H1 (cell line): ENCODE measurements at regions of chr11 and their contacts with region 1.

Region 1: DNA sequence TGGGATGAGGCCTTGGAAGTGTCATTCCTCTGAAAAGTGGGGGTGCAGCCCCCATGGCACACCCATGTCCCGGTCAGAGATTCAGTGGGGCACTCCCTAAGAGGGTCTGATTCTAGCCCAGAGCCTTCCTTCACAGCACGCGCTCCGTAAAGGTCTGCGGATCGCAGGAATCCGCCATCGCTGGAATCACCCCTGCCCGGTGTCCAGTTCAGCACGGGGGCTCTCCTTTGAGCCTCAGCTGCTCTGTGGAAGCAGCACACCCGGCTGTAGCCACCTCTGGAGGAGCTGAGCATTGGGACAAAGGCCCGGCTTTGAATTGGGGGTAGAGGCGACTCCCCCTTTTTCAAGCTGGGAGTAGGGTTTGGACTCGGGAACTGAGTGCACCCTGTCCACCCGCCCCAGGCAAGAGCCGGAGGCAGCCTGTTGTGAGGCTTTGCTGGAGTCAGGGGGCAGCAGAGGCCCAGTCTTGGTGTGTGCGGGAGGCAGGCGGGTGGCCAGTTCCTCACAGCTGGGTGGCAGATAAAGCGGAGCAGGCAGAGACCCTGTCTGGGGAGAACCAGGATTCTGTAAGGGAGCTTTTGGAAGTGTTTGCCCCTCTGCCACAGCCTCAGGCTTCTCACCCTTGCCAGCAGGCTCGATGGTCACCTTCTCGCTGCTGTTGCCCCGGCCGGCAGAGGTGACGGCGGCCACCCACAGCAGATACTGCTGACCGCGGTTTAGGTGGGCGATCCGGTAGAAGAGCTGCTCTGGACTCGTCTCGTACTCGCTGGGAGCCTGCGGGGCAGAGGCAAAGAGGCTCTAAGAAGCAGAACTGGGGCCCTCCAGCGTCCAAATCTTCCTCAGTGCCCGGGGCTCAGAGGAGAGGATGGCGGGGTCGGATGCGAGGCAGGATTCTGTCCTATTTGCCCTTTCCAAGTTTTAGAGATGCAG is 115.9 kb downstream of the CEP164 start:
- DNase-seq: peak; percentile 27 to 77
- H3K4me3 ChIP-seq: no peak overlapping the region
- H3K27ac ChIP-seq: no peak overlapping the region
- H3K4me1 ChIP-seq: peaks cover 0 to 8% (median 1%) of the 10 kb centered on the region in 4 experiments; a peak in 3 of 7 replicates
- H3K27me3 ChIP-seq: peaks cover 0 to 6% (median 0%) of the 10 kb centered on the region in 4 experiments; a peak in 4 of 7 replicates
- CTCF ChIP-seq: peak; percentile 86 to 92 (median 91)
- EP300 ChIP-seq: no peak
- POLR2A ChIP-seq: no peak
- RAD21 ChIP-seq: peak; percentile 95 to 98

Region 2: DNA sequence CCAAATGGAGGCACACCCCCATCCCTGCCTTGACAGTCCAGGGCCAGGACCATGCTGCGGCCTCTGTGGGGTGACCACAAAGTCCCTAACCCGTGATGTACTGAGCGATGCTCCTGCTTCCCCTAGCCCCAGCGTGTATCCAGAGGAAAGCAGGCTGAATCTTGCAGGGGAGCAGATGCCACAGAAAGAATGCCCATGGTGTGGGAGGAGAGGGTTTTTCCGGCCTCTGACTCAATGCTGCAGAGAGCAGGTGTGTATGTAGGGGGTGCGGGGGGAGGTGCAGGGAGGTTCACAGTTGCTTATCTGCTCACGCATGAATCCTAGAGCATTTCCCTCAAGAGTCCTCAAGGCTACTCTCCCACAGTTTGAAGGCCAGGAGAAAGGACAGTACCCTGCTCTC is 14.7 kb after region 1 on chr11:
- CTCF ChIA-PET with region 1: interaction called, 24 read pairs
- POLR2A ChIA-PET with region 1: interaction called, 4 read pairs
- DNase-seq: no peak
- H3K4me3 ChIP-seq: no peak overlapping the region
- H3K27ac ChIP-seq: no peak overlapping the region
- H3K4me1 ChIP-seq: no peaks in the 10 kb centered on the region
- H3K27me3 ChIP-seq: no peaks in the 10 kb centered on the region
- CTCF ChIP-seq: no peak
- EP300 ChIP-seq: no peak
- POLR2A ChIP-seq: no peak
- RAD21 ChIP-seq: no peak

Region 3: GRCh38 chr11:117489999-117490679 is 46.6 kb after region 1 on chr11:
- CTCF ChIA-PET with region 1: interaction called, 11 read pairs
- POLR2A ChIA-PET with region 1: no interaction called
- DNase-seq: no peak
- H3K4me3 ChIP-seq: no peak overlapping the region
- H3K27ac ChIP-seq: no peak overlapping the region
- H3K4me1 ChIP-seq: peaks cover 4 to 14% (median 11%) of the 10 kb centered on the region in 4 experiments
- H3K27me3 ChIP-seq: peaks cover 0 to 5% (median 0%) of the 10 kb centered on the region in 4 experiments; a peak in 2 of 7 replicates
- CTCF ChIP-seq: no peak
- EP300 ChIP-seq: no peak
- POLR2A ChIP-seq: no peak
- RAD21 ChIP-seq: no peak

Region 4: DNA sequence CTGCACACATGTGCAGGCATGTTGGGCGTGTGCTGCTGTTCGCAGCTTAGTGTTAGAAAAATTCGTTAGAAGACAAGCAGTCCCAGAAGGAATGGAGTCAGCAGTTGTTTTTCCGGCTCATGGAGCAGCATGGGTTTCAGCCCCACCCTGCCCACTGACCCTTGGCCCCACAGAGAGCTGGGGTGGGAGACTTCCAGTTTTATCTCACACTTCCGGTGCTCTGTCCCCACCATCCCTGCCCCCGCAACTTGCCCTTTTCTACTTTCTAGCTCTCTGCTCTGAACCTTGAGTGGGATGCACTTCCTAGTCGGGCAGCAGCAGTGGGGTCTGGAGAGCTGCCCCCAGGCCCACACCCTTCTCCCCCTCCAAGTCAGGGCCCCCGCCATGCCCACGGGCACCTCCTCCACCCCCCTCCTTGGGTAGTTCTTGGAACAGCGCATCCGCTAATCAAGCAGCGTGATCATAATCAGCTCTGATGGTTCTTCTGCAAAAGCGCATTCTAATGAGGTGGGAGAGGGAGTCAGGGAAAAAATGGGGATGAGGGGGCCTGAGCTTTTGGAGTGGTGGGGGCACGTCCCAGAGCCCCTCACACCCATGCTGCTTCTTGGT is 68.5 kb after region 1 on chr11:
- CTCF ChIA-PET with region 1: interaction called, 27 read pairs
- POLR2A ChIA-PET with region 1: no interaction called
- DNase-seq: no peak
- H3K4me3 ChIP-seq: no peak overlapping the region
- H3K27ac ChIP-seq: no peak overlapping the region
- H3K4me1 ChIP-seq: peaks cover 7 to 23% (median 14%) of the 10 kb centered on the region in 4 experiments
- H3K27me3 ChIP-seq: no peaks in the 10 kb centered on the region
- CTCF ChIP-seq: no peak
- EP300 ChIP-seq: no peak
- POLR2A ChIP-seq: no peak
- RAD21 ChIP-seq: no peak

Region 5: DNA sequence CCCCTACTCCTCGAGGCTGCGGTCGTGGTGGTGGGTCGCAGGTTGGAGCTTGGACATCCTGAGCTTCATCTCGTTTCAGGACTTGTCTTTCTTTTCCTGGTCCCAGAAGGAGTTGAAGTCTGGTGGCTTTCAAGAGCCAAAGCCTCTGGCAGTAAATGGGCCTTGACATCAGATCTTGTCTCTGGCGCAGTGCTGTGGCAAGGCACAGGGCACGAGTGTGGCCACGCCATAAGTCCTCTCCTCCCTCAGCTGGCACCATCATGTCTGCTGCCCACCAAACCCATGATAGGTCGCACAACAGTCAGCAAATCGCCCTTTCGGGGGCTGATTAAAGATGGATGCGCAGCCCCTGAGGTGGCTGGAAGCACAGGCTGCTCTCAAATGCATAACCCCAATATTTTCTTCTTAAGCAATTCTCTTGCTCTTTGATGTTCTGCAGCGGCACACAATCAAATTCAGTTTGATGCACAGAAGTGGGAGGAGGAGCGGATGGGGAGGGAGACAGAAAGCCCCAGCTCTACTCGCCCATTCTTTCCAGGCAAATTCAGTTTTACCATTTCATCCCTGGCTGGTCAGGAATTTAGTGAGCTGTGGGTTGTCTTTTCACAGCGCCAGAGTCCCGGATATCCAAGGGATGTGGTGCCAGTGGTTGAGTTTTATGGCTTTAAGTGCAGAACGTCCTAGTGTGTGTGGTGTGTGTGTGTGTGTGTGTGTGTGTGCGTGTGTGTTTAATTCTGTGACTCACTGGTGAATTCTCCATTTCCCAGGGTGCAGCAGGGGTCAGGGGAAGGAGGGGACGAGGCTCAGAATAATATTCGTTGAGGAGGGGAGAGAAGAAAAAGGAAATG is 191.4 kb after region 1 on chr11:
- CTCF ChIA-PET with region 1: interaction called, 12 read pairs
- POLR2A ChIA-PET with region 1: no interaction called
- DNase-seq: no peak
- H3K4me3 ChIP-seq: no peak overlapping the region
- H3K27ac ChIP-seq: no peak overlapping the region
- H3K4me1 ChIP-seq: peaks cover 0 to 3% (median 2%) of the 10 kb centered on the region in 4 experiments; a peak in 4 of 7 replicates
- H3K27me3 ChIP-seq: no peaks in the 10 kb centered on the region; a peak in 1 of 7 replicates
- CTCF ChIP-seq: no peak
- EP300 ChIP-seq: no peak
- POLR2A ChIP-seq: no peak
- RAD21 ChIP-seq: no peak

Region 6: GRCh38 chr11:117796872-117797529 is 353.5 kb after region 1 on chr11 and contains the start of gene DSCAML1:
- CTCF ChIA-PET with region 1: interaction called, 11 read pairs
- POLR2A ChIA-PET with region 1: no interaction called
- DNase-seq: peak in 1 of 2 experiments; percentile 77
- H3K4me3 ChIP-seq: peak within 1 kb of the TSS; percentile 23 to 72 (median 54)
- H3K27ac ChIP-seq: no peak within 1 kb of the TSS
- H3K4me1 ChIP-seq: peaks cover 0 to 13% (median 6%) of the 10 kb centered on the region in 4 experiments; a peak in 5 of 7 replicates
- H3K27me3 ChIP-seq: peaks cover 27 to 66% (median 58%) of the 10 kb centered on the region in 4 experiments
- CTCF ChIP-seq: no peak
- EP300 ChIP-seq: no peak
- POLR2A ChIP-seq: no peak
- RAD21 ChIP-seq: no peak
- total RNA-seq, gene DSCAML1: 0.19 and 0.27 TPM in 2 replicates